ENCODE measurements at regions of chr3 and their contacts with region 1.

Region 1: GRCh38 chr3:149473357-149474249 is 894 bp upstream of the TM4SF4 start:
- DNase-seq: no peak
- ATAC-seq: no peak
- H3K4me3 ChIP-seq: no peak overlapping the region
- H3K27ac ChIP-seq: no peak overlapping the region
- H3K4me1 ChIP-seq: peaks cover 6% of the 10 kb centered on the region; the same call in 1 of the 2 replicates
- H3K27me3 ChIP-seq: no peaks in the 10 kb centered on the region
- CTCF ChIP-seq: no peak
- EP300 ChIP-seq: no peak
- POLR2A ChIP-seq: no peak
- RAD21 ChIP-seq: no peak

Region 2: GRCh38 chr3:149487598-149488197 is 14.1 kb after region 1 on chr3:
- CTCF ChIA-PET with region 1: interaction called, 14 read pairs
- POLR2A ChIA-PET with region 1: no interaction called
- RAD21 ChIA-PET with region 1: interaction called, 6 read pairs
- SMC1A ChIA-PET with region 1: interaction called, 4 read pairs
- in situ Hi-C with region 1: no loop called
- intact Hi-C with region 1: no loop called
- DNase-seq: no peak
- ATAC-seq: peak; percentile 96
- H3K4me3 ChIP-seq: no peak overlapping the region
- H3K27ac ChIP-seq: no peak overlapping the region
- H3K4me1 ChIP-seq: no peaks in the 10 kb centered on the region
- H3K27me3 ChIP-seq: no peaks in the 10 kb centered on the region
- CTCF ChIP-seq: peak; percentile 56 to 88 (median 87)
- EP300 ChIP-seq: no peak
- POLR2A ChIP-seq: no peak
- RAD21 ChIP-seq: no peak